ENCODE measurements at regions of chr12 and their contacts with region 1.

Region 1: DNA sequence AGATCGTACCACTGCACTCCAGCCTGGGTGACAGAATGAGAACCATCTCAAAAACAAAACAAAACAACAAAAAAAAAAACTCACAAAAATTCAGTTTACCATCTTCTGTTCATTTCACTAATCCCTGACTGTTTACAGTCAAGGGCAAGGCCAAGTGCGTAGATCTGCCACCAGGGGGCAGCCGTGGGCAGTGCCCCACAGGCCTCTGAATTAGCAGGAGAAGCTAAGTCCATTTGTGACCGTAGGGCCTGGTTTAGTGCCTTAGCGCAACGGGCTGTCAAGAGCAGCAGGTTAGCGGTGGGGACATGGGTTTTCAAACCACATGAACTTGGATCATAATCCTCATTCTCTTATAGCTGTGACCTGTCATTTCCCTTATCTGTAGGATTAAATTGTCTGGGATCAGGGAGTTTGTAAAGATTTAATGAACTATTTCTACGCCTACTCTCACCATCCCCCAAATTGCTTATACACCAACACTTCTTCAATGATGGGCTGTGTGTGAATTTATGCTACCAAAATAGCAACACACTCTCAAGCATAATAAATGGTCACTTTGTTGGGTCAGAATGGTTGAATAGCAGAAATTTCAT is 49.0 kb downstream of the KCTD10 start:
- DNase-seq: peak; percentile 79
- H3K4me3 Mint-ChIP-seq: no peak overlapping the region
- H3K27ac Mint-ChIP-seq: no peak overlapping the region
- H3K4me1 Mint-ChIP-seq: peaks cover 7% of the 10 kb centered on the region
- H3K27me3 Mint-ChIP-seq: peaks cover 16% of the 10 kb centered on the region
- CTCF ChIP-seq: peak; percentile 91

Region 2: DNA sequence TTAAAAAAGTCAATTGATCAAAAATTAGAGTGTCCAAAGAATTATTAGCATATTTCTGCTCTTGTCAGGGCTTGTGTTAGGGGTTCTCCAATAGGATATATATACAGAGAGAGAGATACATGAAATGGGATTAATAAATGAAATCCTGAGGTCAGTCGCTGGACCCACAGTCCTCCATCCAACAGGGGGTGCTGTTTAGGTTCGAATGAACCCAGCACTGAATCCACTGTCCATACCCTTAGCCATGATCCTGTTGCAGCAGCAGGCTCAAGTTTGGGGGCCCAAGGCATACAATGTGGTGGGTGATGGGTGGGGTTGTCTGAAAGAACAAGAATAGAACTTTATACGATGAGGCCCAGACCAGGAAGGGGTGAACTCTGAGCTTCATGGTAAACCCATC is 81.2 kb before region 1 on chr12:
- CTCF ChIA-PET with region 1: no interaction called
- POLR2A ChIA-PET with region 1: no interaction called
- intact Hi-C with region 1: no loop called
- DNase-seq: no peak
- H3K4me3 Mint-ChIP-seq: no peak overlapping the region
- H3K27ac Mint-ChIP-seq: no peak overlapping the region
- H3K4me1 Mint-ChIP-seq: no peaks in the 10 kb centered on the region
- H3K27me3 Mint-ChIP-seq: peaks cover 55% of the 10 kb centered on the region
- CTCF ChIP-seq: no peak

Region 3: DNA sequence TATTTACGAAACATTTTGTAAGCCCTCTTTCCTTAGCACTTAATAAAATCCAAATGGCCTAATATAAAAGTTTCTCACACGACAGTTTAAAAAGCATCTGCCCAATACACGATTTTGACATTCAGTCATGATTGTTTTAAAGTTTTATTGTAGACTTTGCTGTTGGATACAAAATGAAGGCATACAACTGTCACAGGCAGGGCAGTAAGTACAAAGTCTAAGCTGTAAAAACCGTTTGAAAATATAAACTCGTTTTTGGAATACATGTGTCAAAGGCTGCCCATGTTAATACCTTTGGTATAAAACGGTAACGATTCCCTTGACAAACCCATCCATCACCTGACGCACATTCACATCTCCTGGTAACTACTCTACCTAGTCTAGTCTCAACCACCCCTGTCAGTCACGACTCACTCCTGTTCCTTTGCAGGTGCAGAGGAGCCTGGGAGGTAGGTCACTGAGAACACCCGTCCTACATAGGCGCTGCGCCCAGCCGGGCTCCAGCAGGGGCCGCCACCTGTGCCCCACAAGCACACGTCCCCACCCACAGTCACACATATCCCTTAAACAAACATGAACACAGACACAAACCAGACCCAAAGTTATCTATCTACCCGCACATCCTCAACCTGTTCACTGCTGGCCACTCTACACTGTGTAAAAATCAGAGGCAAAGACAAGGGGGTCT is 21.9 kb after region 1 on chr12:
- CTCF ChIA-PET with region 1: interaction called, 22 read pairs
- POLR2A ChIA-PET with region 1: interaction called, 3 read pairs
- intact Hi-C with region 1: no loop called
- DNase-seq: no peak
- H3K4me3 Mint-ChIP-seq: no peak overlapping the region
- H3K27ac Mint-ChIP-seq: no peak overlapping the region
- H3K4me1 Mint-ChIP-seq: no peaks in the 10 kb centered on the region
- H3K27me3 Mint-ChIP-seq: no peaks in the 10 kb centered on the region
- CTCF ChIP-seq: no peak

Region 4: DNA sequence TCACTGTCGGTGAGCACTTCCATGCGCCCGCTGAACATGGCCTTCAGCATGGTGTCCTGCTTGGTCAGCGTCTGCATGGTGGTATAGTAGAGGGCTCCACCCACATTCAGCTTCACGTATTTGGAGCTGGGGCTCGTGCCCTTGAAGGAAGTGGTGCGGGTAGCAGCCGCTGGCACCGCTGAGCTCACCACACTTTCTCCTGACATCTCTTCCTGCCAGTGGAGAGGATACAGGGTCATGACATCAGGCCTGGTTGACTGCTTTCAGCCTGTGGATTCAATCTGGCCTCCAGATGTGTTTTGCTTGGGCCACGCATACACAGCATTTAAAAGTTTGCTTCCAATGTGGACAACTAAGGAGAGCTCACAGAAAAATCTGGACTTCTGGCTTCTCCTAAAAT is 41.4 kb after region 1 on chr12:
- CTCF ChIA-PET with region 1: interaction called, 11 read pairs
- POLR2A ChIA-PET with region 1: no interaction called
- intact Hi-C with region 1: no loop called
- DNase-seq: no peak
- H3K4me3 Mint-ChIP-seq: no peak overlapping the region
- H3K27ac Mint-ChIP-seq: peak overlapping the region; percentile 16
- H3K4me1 Mint-ChIP-seq: peaks cover 14% of the 10 kb centered on the region
- H3K27me3 Mint-ChIP-seq: no peaks in the 10 kb centered on the region
- CTCF ChIP-seq: no peak

Region 5: GRCh38 chr12:109497675-109498074 is 69.5 kb after region 1 on chr12:
- CTCF ChIA-PET with region 1: interaction called, 10 read pairs
- POLR2A ChIA-PET with region 1: no interaction called
- intact Hi-C with region 1: loop called (anchors 2 kb)
- DNase-seq: peak; percentile 75
- H3K4me3 Mint-ChIP-seq: no peak overlapping the region
- H3K27ac Mint-ChIP-seq: peak overlapping the region; percentile 74
- H3K4me1 Mint-ChIP-seq: peaks cover 10% of the 10 kb centered on the region
- H3K27me3 Mint-ChIP-seq: no peaks in the 10 kb centered on the region
- CTCF ChIP-seq: no peak

Region 6: DNA sequence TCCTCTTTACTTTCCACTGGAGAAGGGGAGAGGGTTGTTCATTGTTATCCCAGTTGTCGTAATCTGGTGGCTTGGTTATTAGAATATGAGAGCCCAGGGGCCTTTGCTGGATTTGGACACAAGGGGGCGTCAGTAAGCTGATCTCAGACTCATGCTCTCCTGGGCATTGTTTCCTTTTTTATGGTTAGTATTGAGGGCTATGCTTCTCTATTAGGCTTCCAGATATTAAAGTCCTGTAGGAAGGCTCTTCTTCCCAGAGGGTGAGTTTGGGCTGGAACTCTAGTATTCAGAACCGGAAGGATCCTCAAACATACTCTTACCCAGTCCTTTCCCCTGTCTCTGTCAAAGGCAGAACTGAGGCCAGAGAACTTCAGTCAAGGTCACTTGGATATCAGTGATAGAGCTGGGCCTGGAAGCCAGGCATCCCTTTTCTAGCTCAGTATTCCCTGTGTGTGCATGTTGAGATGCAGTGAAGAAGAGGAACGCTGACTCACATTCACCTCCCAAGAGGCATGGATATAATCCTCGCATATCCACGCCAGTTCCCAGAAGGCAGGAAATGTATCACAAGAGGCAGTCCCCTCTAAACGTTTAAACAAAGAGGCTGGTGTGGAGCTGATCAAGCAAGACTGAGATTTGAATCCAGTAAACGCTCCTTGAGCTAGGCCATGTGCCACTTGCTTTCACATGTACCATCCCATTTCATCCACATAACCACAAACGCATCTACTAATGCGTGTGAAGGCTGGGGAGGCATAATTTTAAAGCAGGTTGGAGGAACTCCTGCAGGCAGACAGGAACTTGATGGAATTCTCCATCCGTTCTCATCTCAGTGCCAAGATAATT is 90.9 kb after region 1 on chr12:
- CTCF ChIA-PET with region 1: interaction called, 4 read pairs
- POLR2A ChIA-PET with region 1: no interaction called
- intact Hi-C with region 1: loop called (anchors 1 kb)
- DNase-seq: peak; percentile 69
- H3K4me3 Mint-ChIP-seq: no peak overlapping the region
- H3K27ac Mint-ChIP-seq: no peak overlapping the region
- H3K4me1 Mint-ChIP-seq: no peaks in the 10 kb centered on the region
- H3K27me3 Mint-ChIP-seq: no peaks in the 10 kb centered on the region
- CTCF ChIP-seq: peak; percentile 78